CD4-positive, alpha-beta memory T cell (primary cell): ENCODE measurements at regions of chr11 and their contacts with region 1.

Region 1: DNA sequence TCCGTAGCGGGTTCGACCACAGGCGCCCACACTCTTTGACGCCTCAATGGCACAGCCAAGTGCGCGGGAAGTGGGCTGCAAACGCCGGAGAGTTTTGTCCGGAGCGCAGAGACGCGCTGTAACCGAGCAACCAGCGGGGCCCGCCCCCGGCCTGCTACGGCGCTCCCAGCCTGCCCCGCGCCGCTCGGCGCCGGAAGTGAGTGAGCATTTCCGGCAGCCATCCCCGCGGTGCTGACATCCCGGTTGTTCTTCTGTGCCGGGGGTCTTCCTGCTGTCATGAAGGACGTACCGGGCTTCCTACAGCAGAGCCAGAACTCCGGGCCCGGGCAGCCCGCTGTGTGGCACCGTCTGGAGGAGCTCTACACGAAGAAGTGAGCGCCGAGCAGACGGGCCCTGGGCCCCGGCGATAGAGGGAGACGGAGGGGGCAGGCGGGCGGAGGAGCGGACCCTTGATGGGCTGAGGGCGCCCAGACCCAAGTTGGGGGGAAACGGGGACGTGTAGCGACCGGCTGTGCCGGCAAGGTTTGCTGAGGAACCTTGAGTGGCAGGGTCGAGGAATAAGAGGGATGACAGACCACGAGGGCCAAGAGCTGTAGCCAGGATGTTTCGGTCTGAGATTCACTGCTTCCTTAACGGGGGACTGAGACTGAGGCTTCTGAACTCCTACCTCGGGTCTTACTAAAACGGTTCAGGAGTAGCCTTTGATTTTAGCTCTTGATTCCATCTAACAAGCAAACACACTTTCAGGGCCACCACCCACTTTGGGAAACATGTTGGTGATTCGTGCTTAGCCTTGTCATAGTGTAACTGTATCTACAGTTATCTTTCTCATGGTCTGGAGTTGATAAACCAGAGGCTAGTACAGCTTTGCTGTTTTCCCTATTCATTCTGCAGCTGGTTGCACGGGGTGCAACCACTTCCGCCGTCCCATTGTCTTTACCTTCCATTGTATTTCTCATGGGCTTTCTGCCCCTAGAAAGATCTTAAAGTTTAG is at the start of gene PSMD13:
- DNase-seq: peak; percentile 85 to 90 (median 88)
- H3K4me3 ChIP-seq: peak within 1 kb of the TSS; percentile 96 to 100
- H3K4me3 Mint-ChIP-seq: peak within 1 kb of the TSS; percentile 98 to 100 (median 99)
- H3K27ac ChIP-seq: peak within 1 kb of the TSS; percentile 100
- H3K27ac Mint-ChIP-seq: peak within 1 kb of the TSS; percentile 97 to 100 (median 100)
- H3K4me1 ChIP-seq: peaks cover 22% of the 10 kb centered on the region
- H3K4me1 Mint-ChIP-seq: peaks cover 31 to 64% (median 46%) of the 10 kb centered on the region in 4 donors
- H3K27me3 ChIP-seq: no peaks in the 10 kb centered on the region
- H3K27me3 Mint-ChIP-seq: no peaks in the 10 kb centered on the region
- total RNA-seq, gene PSMD13: 99.9 to 107 TPM

Region 2: GRCh38 chr11:225734-226453 is 11.2 kb before region 1 on chr11:
- CTCF ChIA-PET with region 1: no interaction called
- POLR2A ChIA-PET with region 1: no interaction called
- intact Hi-C with region 1: no loop called
- DNase-seq: no peak
- H3K4me3 ChIP-seq: no peak overlapping the region
- H3K4me3 Mint-ChIP-seq: no peak overlapping the region
- H3K27ac ChIP-seq: no peak overlapping the region
- H3K27ac Mint-ChIP-seq: peak overlapping the region in 3 of 7 donors; percentile 43 to 84 (median 44)
- H3K4me1 ChIP-seq: no peaks in the 10 kb centered on the region
- H3K4me1 Mint-ChIP-seq: peaks cover 0 to 13% (median 6%) of the 10 kb centered on the region in 4 donors
- H3K27me3 ChIP-seq: no peaks in the 10 kb centered on the region
- H3K27me3 Mint-ChIP-seq: no peaks in the 10 kb centered on the region

Region 3: DNA sequence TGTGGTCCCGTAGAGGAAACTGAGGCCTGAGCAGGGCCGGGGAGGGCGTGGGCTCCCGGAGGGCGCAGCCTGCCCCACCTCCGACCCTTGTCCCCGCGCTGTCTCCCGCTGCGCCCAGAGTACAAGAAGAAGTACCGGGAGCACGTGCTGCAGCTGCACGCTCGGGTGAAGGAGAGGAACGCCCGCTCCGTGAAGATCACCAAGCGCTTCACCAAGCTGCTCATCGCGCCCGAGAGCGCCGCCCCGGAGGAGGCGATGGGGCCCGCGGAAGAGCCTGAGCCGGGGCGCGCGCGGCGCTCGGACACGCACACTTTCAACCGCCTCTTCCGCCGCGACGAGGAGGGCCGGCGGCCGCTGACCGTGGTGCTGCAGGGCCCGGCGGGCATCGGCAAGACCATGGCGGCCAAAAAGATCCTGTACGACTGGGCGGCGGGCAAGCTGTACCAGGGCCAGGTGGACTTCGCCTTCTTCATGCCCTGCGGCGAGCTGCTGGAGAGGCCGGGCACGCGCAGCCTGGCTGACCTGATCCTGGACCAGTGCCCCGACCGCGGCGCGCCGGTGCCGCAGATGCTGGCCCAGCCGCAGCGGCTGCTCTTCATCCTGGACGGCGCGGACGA is 43.0 kb after region 1 on chr11:
- CTCF ChIA-PET with region 1: interaction called, 4 read pairs
- POLR2A ChIA-PET with region 1: interaction called, 29 read pairs
- intact Hi-C with region 1: loop called (anchors 5 kb)
- DNase-seq: peak in 4 of 5 donors; percentile 55 to 61 (median 57)
- H3K4me3 ChIP-seq: peak overlapping the region in 1 of 2 donors; percentile 59
- H3K4me3 Mint-ChIP-seq: peak overlapping the region; percentile 84 to 91 (median 88)
- H3K27ac ChIP-seq: no peak overlapping the region
- H3K27ac Mint-ChIP-seq: peak overlapping the region in 4 of 7 donors; percentile 70 to 92 (median 84)
- H3K4me1 ChIP-seq: peaks cover 60% of the 10 kb centered on the region
- H3K4me1 Mint-ChIP-seq: peaks cover 30 to 61% (median 46%) of the 10 kb centered on the region in 4 donors
- H3K27me3 ChIP-seq: no peaks in the 10 kb centered on the region
- H3K27me3 Mint-ChIP-seq: no peaks in the 10 kb centered on the region

Region 4: GRCh38 chr11:288328-289144 is 51.5 kb after region 1 on chr11 and contains the start of gene PGGHG:
- CTCF ChIA-PET with region 1: no interaction called
- POLR2A ChIA-PET with region 1: interaction called, 31 read pairs
- intact Hi-C with region 1: loop called (anchors 5 kb)
- DNase-seq: peak in 3 of 5 donors; percentile 49 to 60 (median 51)
- H3K4me3 ChIP-seq: peak within 1 kb of the TSS; percentile 83 to 95
- H3K4me3 Mint-ChIP-seq: peak within 1 kb of the TSS; percentile 88 to 99 (median 98)
- H3K27ac ChIP-seq: peak within 1 kb of the TSS; percentile 96
- H3K27ac Mint-ChIP-seq: peak within 1 kb of the TSS; percentile 95 to 100 (median 98)
- H3K4me1 ChIP-seq: peaks cover 38% of the 10 kb centered on the region
- H3K4me1 Mint-ChIP-seq: peaks cover 14 to 51% (median 31%) of the 10 kb centered on the region in 4 donors
- H3K27me3 ChIP-seq: no peaks in the 10 kb centered on the region
- H3K27me3 Mint-ChIP-seq: no peaks in the 10 kb centered on the region
- total RNA-seq, gene PGGHG: 304 TPM

Region 5: DNA sequence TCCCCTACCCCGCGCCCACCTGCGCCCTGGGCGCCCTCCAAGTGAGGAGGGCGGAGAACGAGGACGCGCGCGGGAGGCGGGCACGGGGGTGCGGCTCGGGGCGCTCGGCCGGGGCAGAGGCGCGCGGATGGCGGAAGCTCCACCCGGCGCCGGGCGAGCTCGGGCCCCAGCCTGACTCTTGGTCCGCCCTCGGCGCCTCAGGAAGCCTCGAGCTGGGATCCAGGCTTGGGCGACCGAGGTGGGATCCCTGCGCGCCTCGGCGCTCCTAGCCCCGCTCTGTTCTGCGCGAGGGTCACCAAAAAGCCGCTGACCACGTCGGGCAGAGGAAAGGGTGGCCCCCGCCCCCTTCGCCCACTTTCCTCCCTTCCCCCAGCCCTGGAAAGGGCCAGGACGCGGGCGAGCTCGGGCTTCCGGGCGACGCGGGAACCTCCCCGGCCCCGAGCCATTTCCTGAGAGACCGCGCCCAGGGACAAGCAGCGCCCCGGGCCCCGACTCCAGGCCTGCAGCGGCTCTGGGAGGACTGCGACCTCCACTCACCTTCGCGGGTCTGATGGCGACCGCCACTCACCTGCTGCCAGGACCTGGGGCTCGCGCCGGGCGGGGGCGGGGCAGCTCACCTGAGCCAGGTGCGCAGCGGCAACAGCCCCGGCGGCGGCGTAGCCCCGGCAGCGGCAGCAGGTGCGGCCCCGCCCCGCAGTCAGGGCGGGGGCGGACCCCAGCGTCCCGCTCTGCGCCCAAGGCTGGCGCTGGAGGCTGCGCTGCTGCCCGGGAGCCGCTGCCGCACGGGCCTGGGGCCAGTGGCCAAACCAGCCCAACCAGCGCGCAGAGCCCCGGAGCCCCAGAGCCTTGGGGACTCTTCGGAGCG is 179.9 kb after region 1 on chr11:
- CTCF ChIA-PET with region 1: no interaction called
- POLR2A ChIA-PET with region 1: interaction called, 11 read pairs
- intact Hi-C with region 1: no loop called
- DNase-seq: peak in 4 of 5 donors; percentile 38 to 54 (median 45)
- H3K4me3 ChIP-seq: peak overlapping the region; percentile 17 to 73
- H3K4me3 Mint-ChIP-seq: peak overlapping the region; percentile 26 to 100 (median 96)
- H3K27ac ChIP-seq: peak overlapping the region; percentile 61
- H3K27ac Mint-ChIP-seq: peak overlapping the region in 4 of 7 donors; percentile 70 to 92 (median 83)
- H3K4me1 ChIP-seq: peaks cover 31% of the 10 kb centered on the region
- H3K4me1 Mint-ChIP-seq: peaks cover 4 to 42% (median 17%) of the 10 kb centered on the region in 4 donors
- H3K27me3 ChIP-seq: no peaks in the 10 kb centered on the region
- H3K27me3 Mint-ChIP-seq: no peaks in the 10 kb centered on the region

Region 6: GRCh38 chr11:506238-506994 is 269.3 kb after region 1 on chr11:
- CTCF ChIA-PET with region 1: no interaction called
- POLR2A ChIA-PET with region 1: interaction called, 5 read pairs
- intact Hi-C with region 1: loop called (anchors 1 kb)
- DNase-seq: peak; percentile 94 to 98 (median 97)
- H3K4me3 ChIP-seq: peak overlapping the region; percentile 91 to 99
- H3K4me3 Mint-ChIP-seq: peak overlapping the region; percentile 95 to 100 (median 98)
- H3K27ac ChIP-seq: peak overlapping the region; percentile 100
- H3K27ac Mint-ChIP-seq: peak overlapping the region; percentile 100
- H3K4me1 ChIP-seq: peaks cover 35% of the 10 kb centered on the region
- H3K4me1 Mint-ChIP-seq: peaks cover 6 to 42% (median 25%) of the 10 kb centered on the region in 4 donors
- H3K27me3 ChIP-seq: no peaks in the 10 kb centered on the region
- H3K27me3 Mint-ChIP-seq: no peaks in the 10 kb centered on the region